ENCODE measurements at regions of chr16 and their contacts with region 1.

Region 1: GRCh38 chr16:69859105-69859989 is 91.8 kb upstream of the CLEC18A start:
- DNase-seq: peak; percentile 93
- ATAC-seq: peak; percentile 83
- H3K4me3 ChIP-seq: peak overlapping the region in 1 of 3 experiments; percentile 1; a peak in 1 of 6 replicates
- H3K27ac ChIP-seq: peak overlapping the region; percentile 60
- H3K4me1 ChIP-seq: peaks cover 79% of the 10 kb centered on the region
- H3K27me3 ChIP-seq: no peaks in the 10 kb centered on the region
- CTCF ChIP-seq: peak; percentile 74
- EP300 ChIP-seq: peak in 1 of 2 experiments; percentile 73; a peak in 2 of 4 replicates
- POLR2A ChIP-seq: no peak
- RAD21 ChIP-seq: peak; percentile 50; the same call in 1 of the 2 replicates

Region 2: GRCh38 chr16:69767459-69768229 is 91.7 kb before region 1 on chr16:
- CTCF ChIA-PET with region 1: no interaction called
- POLR2A ChIA-PET with region 1: no interaction called
- in situ Hi-C with region 1: no loop called
- intact Hi-C with region 1: no loop called
- DNase-seq: no peak
- ATAC-seq: no peak
- H3K4me3 ChIP-seq: no peak overlapping the region
- H3K27ac ChIP-seq: peak overlapping the region; percentile 19
- H3K4me1 ChIP-seq: peaks cover 83% of the 10 kb centered on the region
- H3K27me3 ChIP-seq: no peaks in the 10 kb centered on the region; a peak in 1 of 5 replicates
- CTCF ChIP-seq: no peak
- EP300 ChIP-seq: peak in 1 of 2 experiments; percentile 30; a peak in 1 of 4 replicates
- POLR2A ChIP-seq: no peak
- RAD21 ChIP-seq: no peak

Region 3: GRCh38 chr16:69781118-69781517 is 78.2 kb before region 1 on chr16:
- CTCF ChIA-PET with region 1: no interaction called
- POLR2A ChIA-PET with region 1: no interaction called
- in situ Hi-C with region 1: no loop called
- intact Hi-C with region 1: no loop called
- DNase-seq: peak; percentile 29
- ATAC-seq: peak; percentile 73
- H3K4me3 ChIP-seq: no peak overlapping the region
- H3K27ac ChIP-seq: peak overlapping the region; percentile 22
- H3K4me1 ChIP-seq: peaks cover 14% of the 10 kb centered on the region
- H3K27me3 ChIP-seq: no peaks in the 10 kb centered on the region
- CTCF ChIP-seq: no peak
- EP300 ChIP-seq: no peak
- POLR2A ChIP-seq: no peak
- RAD21 ChIP-seq: no peak

Region 4: GRCh38 chr16:69796351-69797118 is 62.8 kb before region 1 on chr16:
- CTCF ChIA-PET with region 1: interaction called, 67 read pairs
- POLR2A ChIA-PET with region 1: no interaction called
- in situ Hi-C with region 1: loop called (anchors 5 kb)
- intact Hi-C with region 1: loop called (anchors 1 kb)
- DNase-seq: peak; percentile 74
- ATAC-seq: peak; percentile 85
- H3K4me3 ChIP-seq: no peak overlapping the region
- H3K27ac ChIP-seq: no peak overlapping the region
- H3K4me1 ChIP-seq: peaks cover 5% of the 10 kb centered on the region
- H3K27me3 ChIP-seq: no peaks in the 10 kb centered on the region; a peak in 1 of 5 replicates
- CTCF ChIP-seq: peak; percentile 94
- EP300 ChIP-seq: no peak
- POLR2A ChIP-seq: no peak
- RAD21 ChIP-seq: peak; percentile 96

Region 5: DNA sequence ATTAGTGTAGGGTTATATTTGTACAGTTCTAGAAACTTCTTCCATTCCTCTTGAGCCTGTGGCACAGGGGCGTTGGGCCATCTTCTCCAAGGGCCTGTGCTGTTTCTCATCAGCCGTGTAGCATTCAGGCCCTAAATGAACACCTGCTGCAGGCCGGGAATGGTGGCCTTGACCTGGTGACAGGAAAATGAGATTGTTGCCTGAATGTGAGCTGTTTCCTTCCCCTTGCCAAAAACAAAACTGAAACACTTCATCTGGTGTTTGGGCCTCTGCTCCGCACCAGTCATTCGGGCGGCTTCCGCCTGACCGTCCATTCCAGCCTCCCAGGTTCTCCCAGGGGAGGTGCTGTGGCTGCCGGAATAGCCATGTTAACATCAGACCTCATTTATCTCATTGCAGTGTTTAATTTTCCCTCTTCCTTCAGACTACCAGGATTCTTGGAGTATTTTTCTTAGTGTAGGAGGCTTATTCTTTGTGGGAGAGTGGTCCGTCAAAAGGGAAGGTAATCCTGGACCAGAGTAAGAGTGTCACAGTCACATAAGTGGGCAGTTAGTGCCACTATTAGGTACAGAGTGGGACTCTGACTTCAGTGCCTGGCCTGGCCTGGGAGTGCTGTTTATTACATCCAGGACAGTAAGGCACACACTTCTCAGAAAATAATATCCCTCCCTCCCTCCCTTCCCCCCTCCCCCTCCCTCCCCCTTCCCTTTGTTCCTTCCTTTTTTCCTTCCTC is 35.4 kb before region 1 on chr16:
- CTCF ChIA-PET with region 1: no interaction called
- POLR2A ChIA-PET with region 1: no interaction called
- in situ Hi-C with region 1: no loop called
- intact Hi-C with region 1: loop called (anchors 5 kb)
- DNase-seq: no peak
- ATAC-seq: peak; percentile 47
- H3K4me3 ChIP-seq: no peak overlapping the region
- H3K27ac ChIP-seq: peak overlapping the region; percentile 51
- H3K4me1 ChIP-seq: peaks cover 88% of the 10 kb centered on the region
- H3K27me3 ChIP-seq: no peaks in the 10 kb centered on the region
- CTCF ChIP-seq: 0 out of 2 replicates have a peak, but pooled peaks have one; percentile 10
- EP300 ChIP-seq: peak in 1 of 2 experiments; percentile 63; a peak in 2 of 4 replicates
- POLR2A ChIP-seq: no peak
- RAD21 ChIP-seq: no peak

Region 6: DNA sequence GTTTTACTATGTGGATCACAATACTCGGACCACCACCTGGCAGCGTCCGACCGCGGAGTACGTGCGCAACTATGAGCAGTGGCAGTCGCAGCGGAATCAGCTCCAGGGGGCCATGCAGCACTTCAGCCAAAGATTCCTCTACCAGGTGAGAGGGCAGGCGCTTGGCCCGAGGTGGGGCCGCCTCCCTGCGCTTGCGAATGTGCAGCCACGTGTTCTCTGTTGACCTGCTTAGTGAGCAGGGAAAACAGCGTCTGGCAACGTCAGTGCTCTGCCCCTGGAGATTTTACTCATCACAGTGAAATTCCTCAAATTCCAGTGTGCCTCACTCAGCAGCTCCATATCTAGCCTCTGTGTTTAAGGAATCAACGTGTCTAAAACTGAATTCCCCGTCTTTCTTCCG is 58.4 kb after region 1 on chr16:
- CTCF ChIA-PET with region 1: no interaction called
- POLR2A ChIA-PET with region 1: no interaction called
- in situ Hi-C with region 1: no loop called
- intact Hi-C with region 1: no loop called
- DNase-seq: no peak
- ATAC-seq: no peak
- H3K4me3 ChIP-seq: no peak overlapping the region
- H3K27ac ChIP-seq: no peak overlapping the region
- H3K4me1 ChIP-seq: no peaks in the 10 kb centered on the region
- H3K27me3 ChIP-seq: no peaks in the 10 kb centered on the region
- CTCF ChIP-seq: no peak
- EP300 ChIP-seq: no peak
- POLR2A ChIP-seq: no peak
- RAD21 ChIP-seq: no peak

Region 7: DNA sequence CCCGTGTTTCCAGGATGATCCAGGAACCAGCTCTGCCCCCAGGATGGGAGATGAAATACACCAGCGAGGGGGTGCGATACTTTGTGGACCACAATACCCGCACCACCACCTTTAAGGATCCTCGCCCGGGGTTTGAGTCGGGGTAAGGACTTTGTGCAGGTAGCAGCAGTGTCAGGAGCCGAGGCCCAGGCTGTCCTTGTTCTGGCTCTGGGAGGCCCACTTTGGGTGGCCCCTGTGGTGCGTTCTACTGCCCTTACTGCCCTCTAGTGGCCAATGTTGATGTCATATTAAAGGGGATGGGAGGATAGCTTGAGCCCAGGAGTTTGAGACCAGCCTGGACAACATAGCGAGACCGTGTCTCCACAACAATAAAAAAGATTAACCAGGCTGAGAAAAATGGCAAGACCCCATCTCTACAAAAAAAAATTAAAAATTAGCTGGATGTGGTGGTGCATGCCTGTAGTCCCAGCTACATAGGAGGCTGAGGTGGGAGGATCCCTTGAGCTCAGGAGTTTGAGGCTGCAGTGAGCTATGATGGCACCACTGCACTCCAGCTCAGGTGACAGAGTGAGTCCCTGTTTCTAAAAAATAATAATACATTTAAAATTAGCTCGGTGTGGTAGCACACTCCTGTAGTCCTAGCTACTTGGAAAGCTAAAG is 70.9 kb after region 1 on chr16:
- CTCF ChIA-PET with region 1: no interaction called
- POLR2A ChIA-PET with region 1: no interaction called
- in situ Hi-C with region 1: no loop called
- intact Hi-C with region 1: loop called (anchors 5 kb)
- DNase-seq: peak; percentile 76
- ATAC-seq: peak; percentile 92
- H3K4me3 ChIP-seq: no peak overlapping the region
- H3K27ac ChIP-seq: no peak overlapping the region
- H3K4me1 ChIP-seq: peaks cover 30% of the 10 kb centered on the region
- H3K27me3 ChIP-seq: no peaks in the 10 kb centered on the region
- CTCF ChIP-seq: peak; percentile 94
- EP300 ChIP-seq: no peak
- POLR2A ChIP-seq: no peak
- RAD21 ChIP-seq: peak; percentile 92